Activated CD4-positive, alpha-beta T cell treated with anti-CD3 and anti-CD28 coated beads for 36 hours (primary cell): ENCODE measurements at regions of chr2 and their contacts with region 1.

Region 1: GRCh38 chr2:137865954-137866540 is 98.2 kb upstream of the HNMT start:
- DNase-seq: peak; percentile 72
- ATAC-seq: peak; percentile 42
- H3K4me3 Mint-ChIP-seq: no peak overlapping the region
- H3K27ac Mint-ChIP-seq: no peak overlapping the region
- H3K4me1 Mint-ChIP-seq: no peaks in the 10 kb centered on the region
- H3K27me3 Mint-ChIP-seq: peaks cover 4% of the 10 kb centered on the region

Region 2: DNA sequence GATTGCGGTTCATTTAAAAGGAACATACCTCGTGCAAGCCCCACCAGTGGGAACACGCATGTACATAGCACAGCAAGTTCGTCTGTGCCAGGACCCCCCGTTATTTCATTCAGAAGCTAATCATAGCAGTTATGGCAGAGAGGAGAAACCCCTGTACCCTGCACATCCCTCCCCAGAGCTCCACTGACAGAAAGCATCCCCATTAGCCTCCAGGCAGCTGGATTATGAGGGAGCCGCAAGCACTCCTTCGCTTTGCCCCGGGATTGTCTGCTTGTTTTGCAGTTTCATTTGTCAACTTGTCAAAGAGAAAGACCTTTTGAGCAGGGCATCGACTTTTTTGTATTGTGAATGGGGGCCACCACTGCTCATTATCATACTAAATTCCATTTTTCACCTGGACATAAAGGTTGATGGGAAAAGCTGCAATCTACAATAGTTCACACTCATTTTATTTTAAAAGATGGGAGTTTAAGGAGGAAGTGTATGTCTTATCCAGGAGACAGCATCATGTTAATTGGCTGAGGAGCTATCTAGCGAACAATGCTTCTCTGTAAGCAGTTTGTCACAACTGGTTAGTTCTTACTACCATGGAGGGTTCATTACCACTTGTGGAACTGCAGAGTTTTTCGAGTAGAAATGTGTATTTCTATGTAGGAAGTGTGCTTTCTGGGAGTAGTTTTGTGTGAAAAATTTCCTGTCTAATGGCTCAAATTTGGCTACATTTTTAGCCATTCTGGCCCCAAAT is 845.4 kb before region 1 on chr2:
- CTCF ChIA-PET with region 1: no interaction called
- POLR2A ChIA-PET with region 1: no interaction called
- intact Hi-C with region 1: no loop called
- DNase-seq: no peak
- ATAC-seq: no peak
- H3K4me3 Mint-ChIP-seq: no peak overlapping the region
- H3K27ac Mint-ChIP-seq: no peak overlapping the region
- H3K4me1 Mint-ChIP-seq: no peaks in the 10 kb centered on the region
- H3K27me3 Mint-ChIP-seq: peaks cover 4% of the 10 kb centered on the region

Region 3: DNA sequence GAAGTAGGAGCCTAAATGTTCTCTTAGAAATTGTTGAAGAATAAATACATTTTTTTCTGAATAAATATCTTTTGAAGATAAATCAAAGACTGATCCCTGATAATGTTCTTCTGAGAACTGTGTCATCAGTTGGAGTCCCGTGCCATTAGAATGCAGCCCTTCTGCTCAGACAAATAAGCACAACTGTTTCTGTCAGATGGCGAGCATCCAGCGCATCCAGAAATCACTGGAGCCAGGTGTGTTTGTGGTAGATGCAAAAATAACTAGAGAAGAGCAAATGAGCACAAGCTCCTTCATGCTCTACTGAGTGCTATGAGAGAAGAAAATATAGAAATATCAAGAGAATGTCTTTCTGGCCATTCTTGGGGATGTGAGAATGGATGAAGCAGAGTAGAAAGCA is 527.0 kb before region 1 on chr2:
- CTCF ChIA-PET with region 1: no interaction called
- POLR2A ChIA-PET with region 1: no interaction called
- intact Hi-C with region 1: no loop called
- DNase-seq: no peak
- ATAC-seq: no peak
- H3K4me3 Mint-ChIP-seq: no peak overlapping the region
- H3K27ac Mint-ChIP-seq: no peak overlapping the region
- H3K4me1 Mint-ChIP-seq: no peaks in the 10 kb centered on the region
- H3K27me3 Mint-ChIP-seq: no peaks in the 10 kb centered on the region

Region 4: GRCh38 chr2:138373993-138374408 is 508.0 kb after region 1 on chr2:
- CTCF ChIA-PET with region 1: no interaction called
- POLR2A ChIA-PET with region 1: no interaction called
- intact Hi-C with region 1: loop called in 1 of 2 experiments (anchors 1 kb)
- DNase-seq: peak; percentile 12
- ATAC-seq: no peak
- H3K4me3 Mint-ChIP-seq: no peak overlapping the region
- H3K27ac Mint-ChIP-seq: no peak overlapping the region
- H3K4me1 Mint-ChIP-seq: no peaks in the 10 kb centered on the region
- H3K27me3 Mint-ChIP-seq: no peaks in the 10 kb centered on the region

Region 5: GRCh38 chr2:138716183-138716582 is 850.1 kb after region 1 on chr2:
- CTCF ChIA-PET with region 1: no interaction called
- POLR2A ChIA-PET with region 1: no interaction called
- intact Hi-C with region 1: loop called in 1 of 2 experiments (anchors 5 kb)
- DNase-seq: no peak
- ATAC-seq: no peak
- H3K4me3 Mint-ChIP-seq: no peak overlapping the region
- H3K27ac Mint-ChIP-seq: no peak overlapping the region
- H3K4me1 Mint-ChIP-seq: no peaks in the 10 kb centered on the region
- H3K27me3 Mint-ChIP-seq: peaks cover 6% of the 10 kb centered on the region